GM10248 (cell line): ENCODE measurements at regions of chr1 and their contacts with region 1.

Region 1: GRCh38 chr1:94025383-94026340 is 95.3 kb downstream of the ABCA4 start:
- DNase-seq: peak; percentile 45
- CTCF ChIP-seq: peak; percentile 52

Region 2: DNA sequence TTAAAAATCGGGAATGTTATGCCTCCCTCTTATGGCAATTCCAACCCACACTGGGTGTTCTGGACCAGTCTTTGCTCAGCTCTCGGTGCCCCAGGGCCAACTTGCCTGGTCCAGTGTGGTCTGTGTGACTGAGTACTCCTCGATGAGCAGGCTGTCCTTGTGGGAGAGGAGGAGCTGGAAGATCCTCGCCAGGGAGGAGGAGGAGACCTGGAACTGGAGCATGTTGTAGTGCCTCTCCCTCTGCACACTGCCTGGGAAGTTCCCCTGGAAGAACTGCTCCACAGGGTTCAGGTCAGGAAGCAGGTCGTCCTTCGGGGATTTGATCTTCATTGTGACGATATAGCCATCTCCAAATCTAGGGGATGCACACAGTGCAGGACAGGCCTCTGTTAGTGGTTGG is 27.9 kb before region 1 on chr1:
- CTCF ChIA-PET with region 1: no interaction called
- POLR2A ChIA-PET with region 1: no interaction called
- DNase-seq: no peak
- CTCF ChIP-seq: no peak

Region 3: GRCh38 chr1:94012686-94013624 is 12.7 kb before region 1 on chr1:
- CTCF ChIA-PET with region 1: interaction called, 370 read pairs
- POLR2A ChIA-PET with region 1: no interaction called
- DNase-seq: no peak
- CTCF ChIP-seq: no peak

Region 4: DNA sequence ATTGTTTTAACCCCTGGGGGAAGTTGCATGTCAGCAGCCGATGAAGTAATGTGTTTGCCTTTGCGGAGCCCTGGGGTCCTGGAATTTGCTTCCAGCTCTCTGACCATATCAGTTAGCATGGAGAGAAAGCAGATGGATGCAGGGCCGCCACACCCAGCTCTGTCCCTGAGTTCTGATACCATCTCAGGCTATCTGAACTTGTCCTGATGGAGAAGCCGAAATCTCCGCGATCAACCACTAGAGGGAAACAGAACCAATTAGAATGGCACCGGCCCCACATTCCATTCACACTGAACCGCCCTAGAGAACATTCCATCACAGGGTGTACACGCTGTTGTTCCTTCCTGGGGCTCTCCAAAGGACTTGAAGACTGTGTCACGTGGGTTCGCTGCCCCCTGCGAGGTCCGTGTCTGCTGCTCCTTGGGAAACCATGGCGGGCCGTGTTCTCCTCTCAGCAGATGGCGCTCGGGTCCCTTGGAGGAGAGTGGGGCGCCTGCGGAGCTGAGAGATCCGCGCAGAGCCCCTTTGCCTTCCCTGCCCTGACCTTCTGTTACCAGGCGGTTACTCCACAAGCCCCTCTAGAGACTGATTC is 19.9 kb after region 1 on chr1:
- CTCF ChIA-PET with region 1: interaction called, 370 read pairs
- POLR2A ChIA-PET with region 1: no interaction called
- DNase-seq: peak; percentile 53
- CTCF ChIP-seq: peak; percentile 34

Region 5: GRCh38 chr1:94463765-94464330 is 438.2 kb after region 1 on chr1:
- CTCF ChIA-PET with region 1: interaction called, 47 read pairs
- POLR2A ChIA-PET with region 1: no interaction called
- DNase-seq: peak; percentile 22
- CTCF ChIP-seq: peak; percentile 60